Activated CD4-positive, alpha-beta memory T cell treated with anti-CD3 and anti-CD28 coated beads, Interleukin-2, amount 10 ng/mL, durations not matched to agents 7 days and 5 days (primary cell): ENCODE measurements at regions of chr6 and their contacts with region 1.

Region 1: DNA sequence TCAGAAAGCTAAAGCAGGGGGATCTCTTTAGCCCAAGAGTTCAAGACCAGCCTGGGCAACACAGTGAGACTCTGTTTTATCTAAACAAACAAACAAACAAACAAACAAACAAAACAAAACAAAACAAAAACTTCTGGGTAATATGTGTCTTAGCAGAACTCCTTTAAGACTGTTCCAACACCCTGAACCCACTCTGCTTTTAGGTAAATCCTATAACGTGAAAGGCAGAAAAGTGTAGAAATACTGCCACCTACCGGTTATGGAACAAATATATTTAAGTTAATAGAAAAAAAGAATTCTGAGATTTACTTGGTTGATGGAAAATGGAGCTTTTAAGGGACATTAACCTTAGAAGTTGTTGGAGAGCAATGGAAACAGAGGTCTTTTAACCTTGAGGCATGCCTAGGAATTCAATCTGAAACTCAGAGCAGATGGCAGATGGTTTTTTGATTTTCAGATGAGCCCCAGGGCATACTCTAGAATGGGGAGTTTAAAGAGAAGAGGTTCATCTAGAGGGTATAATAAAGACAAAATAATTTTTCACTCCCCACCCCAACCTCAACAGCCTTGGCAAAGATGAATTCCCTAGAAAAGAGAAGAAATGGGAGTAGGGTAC is 38.5 kb downstream of the SOD2 start:
- DNase-seq: no peak
- H3K4me3 Mint-ChIP-seq: no peak overlapping the region
- H3K27ac Mint-ChIP-seq: no peak overlapping the region
- H3K4me1 Mint-ChIP-seq: no peaks in the 10 kb centered on the region
- H3K27me3 Mint-ChIP-seq: no peaks in the 10 kb centered on the region

Region 2: GRCh38 chr6:159633196-159633595 is 21.4 kb before region 1 on chr6:
- CTCF ChIA-PET with region 1: interaction called, 21 read pairs
- POLR2A ChIA-PET with region 1: no interaction called
- DNase-seq: no peak
- H3K4me3 Mint-ChIP-seq: no peak overlapping the region
- H3K27ac Mint-ChIP-seq: no peak overlapping the region
- H3K4me1 Mint-ChIP-seq: no peaks in the 10 kb centered on the region
- H3K27me3 Mint-ChIP-seq: no peaks in the 10 kb centered on the region